PC-9 (cell line): ENCODE measurements at regions of chr6 and their contacts with region 1.

Region 1: GRCh38 chr6:35583893-35584688 is 71.4 kb upstream of the TULP1 start:
- DNase-seq: peak; percentile 63 to 66
- H3K4me3 ChIP-seq: no peak overlapping the region
- H3K27ac ChIP-seq: no peak overlapping the region
- H3K4me1 ChIP-seq: peaks cover 4% of the 10 kb centered on the region
- H3K27me3 ChIP-seq: no peaks in the 10 kb centered on the region
- CTCF ChIP-seq: peak; percentile 91

Region 2: DNA sequence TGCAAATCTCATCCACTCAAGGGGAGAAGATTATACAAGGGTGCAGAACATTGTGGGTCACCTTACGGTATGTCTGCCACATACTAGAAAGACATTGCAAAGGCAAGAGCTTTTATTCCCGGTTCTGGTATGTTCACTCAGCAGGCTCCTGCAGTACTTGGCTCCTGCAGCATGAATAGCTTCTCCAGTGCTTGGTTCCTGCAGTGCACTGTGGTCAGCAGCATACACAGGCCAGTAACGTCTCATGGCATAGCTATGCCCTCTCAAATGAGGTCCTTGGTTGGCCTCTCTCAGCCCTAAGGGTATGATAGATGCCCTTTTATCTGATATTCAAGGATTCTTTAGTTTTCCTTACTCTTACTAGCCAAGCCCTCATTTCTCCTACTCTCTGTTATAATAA is 455.6 kb before region 1 on chr6:
- CTCF ChIA-PET with region 1: no interaction called
- POLR2A ChIA-PET with region 1: no interaction called
- intact Hi-C with region 1: no loop called
- DNase-seq: peak in 1 of 2 experiments; percentile 40
- H3K4me3 ChIP-seq: no peak overlapping the region
- H3K27ac ChIP-seq: no peak overlapping the region
- H3K4me1 ChIP-seq: no peaks in the 10 kb centered on the region
- H3K27me3 ChIP-seq: no peaks in the 10 kb centered on the region
- CTCF ChIP-seq: no peak

Region 3: GRCh38 chr6:35297601-35298481 is 286.2 kb before region 1 on chr6 and contains the start of gene DEF6:
- CTCF ChIA-PET with region 1: interaction called, 5 read pairs
- POLR2A ChIA-PET with region 1: no interaction called
- intact Hi-C with region 1: loop called (anchors 2 kb)
- DNase-seq: peak; percentile 87
- H3K4me3 ChIP-seq: peak within 1 kb of the TSS; percentile 66
- H3K27ac ChIP-seq: no peak within 1 kb of the TSS
- H3K4me1 ChIP-seq: peaks cover 23% of the 10 kb centered on the region
- H3K27me3 ChIP-seq: no peaks in the 10 kb centered on the region
- CTCF ChIP-seq: peak; percentile 85
- total RNA-seq, gene DEF6: 19.6 and 27.0 TPM in 2 replicates

Region 4: DNA sequence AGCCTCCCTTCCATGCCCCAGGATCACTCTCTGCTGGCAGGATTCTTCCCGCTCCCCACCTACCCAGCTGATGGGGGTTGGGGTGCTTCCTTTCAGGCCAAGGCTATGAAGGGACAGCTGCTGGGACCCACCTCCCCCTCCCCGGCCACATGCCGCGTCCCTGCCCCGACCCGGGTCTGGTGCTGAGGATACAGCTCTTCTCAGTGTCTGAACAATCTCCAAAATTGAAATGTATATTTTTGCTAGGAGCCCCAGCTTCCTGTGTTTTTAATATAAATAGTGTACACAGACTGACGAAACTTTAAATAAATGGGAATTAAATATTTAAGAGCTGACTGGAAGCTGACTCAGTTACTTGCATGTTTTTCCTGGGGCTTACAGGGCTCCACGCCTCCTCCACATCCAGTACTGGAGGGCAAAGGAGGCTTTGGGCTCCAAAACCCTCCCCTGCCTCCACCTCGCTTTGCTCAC is 156.2 kb before region 1 on chr6:
- CTCF ChIA-PET with region 1: no interaction called
- POLR2A ChIA-PET with region 1: no interaction called
- intact Hi-C with region 1: no loop called
- DNase-seq: no peak
- H3K4me3 ChIP-seq: no peak overlapping the region
- H3K27ac ChIP-seq: no peak overlapping the region
- H3K4me1 ChIP-seq: no peaks in the 10 kb centered on the region
- H3K27me3 ChIP-seq: no peaks in the 10 kb centered on the region
- CTCF ChIP-seq: no peak

Region 5: DNA sequence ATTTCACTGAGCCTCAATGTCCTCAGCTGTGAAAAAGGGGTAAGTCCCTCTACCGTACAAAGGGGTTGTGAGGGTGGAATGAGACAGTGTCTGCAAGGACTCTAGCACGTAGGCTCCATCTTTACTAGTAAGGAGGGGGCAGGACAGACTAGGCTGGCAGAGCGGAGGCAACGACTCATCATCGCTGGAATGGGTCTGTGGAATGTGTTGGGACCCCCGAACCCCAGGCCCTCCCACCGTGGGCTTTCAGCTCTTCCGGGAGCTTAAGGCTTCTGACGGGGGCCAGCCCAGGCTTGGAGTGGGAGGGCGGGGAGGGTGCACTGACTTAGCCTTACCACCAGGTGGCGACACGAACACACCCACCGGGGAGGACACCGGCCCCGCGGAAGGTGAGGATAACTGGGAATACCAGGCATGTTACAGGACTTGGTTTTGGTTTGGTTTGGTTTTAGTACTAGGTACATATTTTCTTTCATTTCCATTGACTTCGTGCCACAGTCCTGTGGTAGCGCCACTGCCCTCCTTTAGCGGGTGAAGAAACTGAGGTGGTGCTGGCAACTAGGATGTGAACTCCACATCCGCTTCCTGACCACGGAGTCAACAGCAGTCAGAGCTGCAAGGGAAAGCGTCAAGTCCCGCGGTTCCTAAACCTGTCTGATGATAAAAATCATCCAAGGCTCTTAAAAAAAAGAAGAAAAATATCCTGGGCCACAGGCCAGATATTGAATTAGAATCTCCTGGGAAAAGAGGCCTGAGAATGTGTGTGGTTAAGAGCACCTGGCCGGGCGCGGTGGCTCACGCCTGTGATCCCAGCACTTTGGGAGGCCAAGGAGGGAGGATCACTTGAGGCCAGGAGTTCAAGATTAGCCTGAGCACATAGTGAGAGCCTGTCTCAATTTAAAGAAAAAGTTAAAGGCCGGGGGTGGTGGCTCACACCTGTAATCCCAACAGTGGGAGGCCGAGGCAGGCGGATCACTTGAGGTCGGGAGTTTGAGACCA is 61.1 kb before region 1 on chr6:
- CTCF ChIA-PET with region 1: interaction called, 17 read pairs
- POLR2A ChIA-PET with region 1: no interaction called
- intact Hi-C with region 1: loop called (anchors 5 kb)
- DNase-seq: peak; percentile 45 to 69
- H3K4me3 ChIP-seq: no peak overlapping the region
- H3K27ac ChIP-seq: no peak overlapping the region
- H3K4me1 ChIP-seq: 0 out of 2 replicates have a peak, but pooled peaks cover 12% of the 10 kb centered on the region
- H3K27me3 ChIP-seq: no peaks in the 10 kb centered on the region
- CTCF ChIP-seq: peak; percentile 96

Region 6: DNA sequence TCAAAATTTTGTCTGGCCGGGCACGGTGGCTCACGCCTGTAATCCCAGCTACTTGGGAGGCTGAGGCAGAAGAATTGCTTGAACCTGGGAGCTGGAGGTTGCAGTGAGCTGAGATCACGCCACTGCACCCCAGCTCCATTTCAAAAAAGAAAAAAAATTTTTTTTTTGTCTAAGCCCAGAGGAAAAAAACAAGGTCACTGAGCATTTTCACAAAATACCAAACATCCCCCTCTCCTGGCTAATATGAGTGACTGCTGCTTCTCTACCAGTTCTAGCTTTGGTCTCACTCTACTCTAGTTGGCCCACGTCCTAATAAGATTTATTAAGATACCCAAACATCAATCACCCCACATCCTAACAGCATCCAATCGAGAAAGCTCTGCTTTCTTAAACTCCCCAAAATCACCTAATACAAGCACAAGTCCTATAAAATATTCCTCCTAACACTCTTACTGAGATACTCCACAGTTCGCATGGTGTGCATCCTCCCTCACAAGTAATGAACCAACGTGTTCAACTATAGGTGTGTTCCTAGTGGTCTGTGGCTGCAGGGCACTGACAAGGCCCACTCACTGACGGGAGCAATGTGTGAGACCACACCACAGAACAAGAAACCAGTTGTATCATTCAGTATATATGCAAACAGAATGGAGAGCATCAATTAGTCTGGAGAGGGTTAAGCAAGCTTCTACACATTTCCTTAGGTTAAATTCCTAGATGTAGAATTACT is 40.4 kb after region 1 on chr6:
- CTCF ChIA-PET with region 1: interaction called, 3 read pairs
- POLR2A ChIA-PET with region 1: interaction called, 3 read pairs
- intact Hi-C with region 1: loop called (anchors 1 kb)
- DNase-seq: peak in 1 of 2 experiments; percentile 43
- H3K4me3 ChIP-seq: no peak overlapping the region
- H3K27ac ChIP-seq: no peak overlapping the region
- H3K4me1 ChIP-seq: peaks cover 6% of the 10 kb centered on the region; the same call in 1 of the 2 replicates
- H3K27me3 ChIP-seq: no peaks in the 10 kb centered on the region
- CTCF ChIP-seq: peak; percentile 63

Region 7: GRCh38 chr6:35688581-35689322 is 104.7 kb after region 1 on chr6 and contains the start of gene FKBP5:
- CTCF ChIA-PET with region 1: interaction called, 4 read pairs
- POLR2A ChIA-PET with region 1: no interaction called
- intact Hi-C with region 1: loop called (anchors 5 kb)
- DNase-seq: peak; percentile 73 to 94
- H3K4me3 ChIP-seq: peak within 1 kb of the TSS; percentile 69
- H3K27ac ChIP-seq: no peak within 1 kb of the TSS
- H3K4me1 ChIP-seq: peaks cover 16% of the 10 kb centered on the region; the same call in 1 of the 2 replicates
- H3K27me3 ChIP-seq: no peaks in the 10 kb centered on the region
- CTCF ChIP-seq: no peak
- total RNA-seq, gene FKBP5: 3.9 and 5.0 TPM in 2 replicates

Region 8: GRCh38 chr6:36094753-36095496 is 510.8 kb after region 1 on chr6:
- CTCF ChIA-PET with region 1: no interaction called
- POLR2A ChIA-PET with region 1: no interaction called
- intact Hi-C with region 1: loop called (anchors 10 kb)
- DNase-seq: peak; percentile 66
- H3K4me3 ChIP-seq: no peak overlapping the region
- H3K27ac ChIP-seq: peak overlapping the region; percentile 35
- H3K4me1 ChIP-seq: no peaks in the 10 kb centered on the region; the same call in 1 of the 2 replicates
- H3K27me3 ChIP-seq: no peaks in the 10 kb centered on the region
- CTCF ChIP-seq: peak; percentile 97